Esophagus muscularis mucosa (tissue), 4 donors: ENCODE measurements at regions of chr19 and their contacts with region 1.

Region 1: DNA sequence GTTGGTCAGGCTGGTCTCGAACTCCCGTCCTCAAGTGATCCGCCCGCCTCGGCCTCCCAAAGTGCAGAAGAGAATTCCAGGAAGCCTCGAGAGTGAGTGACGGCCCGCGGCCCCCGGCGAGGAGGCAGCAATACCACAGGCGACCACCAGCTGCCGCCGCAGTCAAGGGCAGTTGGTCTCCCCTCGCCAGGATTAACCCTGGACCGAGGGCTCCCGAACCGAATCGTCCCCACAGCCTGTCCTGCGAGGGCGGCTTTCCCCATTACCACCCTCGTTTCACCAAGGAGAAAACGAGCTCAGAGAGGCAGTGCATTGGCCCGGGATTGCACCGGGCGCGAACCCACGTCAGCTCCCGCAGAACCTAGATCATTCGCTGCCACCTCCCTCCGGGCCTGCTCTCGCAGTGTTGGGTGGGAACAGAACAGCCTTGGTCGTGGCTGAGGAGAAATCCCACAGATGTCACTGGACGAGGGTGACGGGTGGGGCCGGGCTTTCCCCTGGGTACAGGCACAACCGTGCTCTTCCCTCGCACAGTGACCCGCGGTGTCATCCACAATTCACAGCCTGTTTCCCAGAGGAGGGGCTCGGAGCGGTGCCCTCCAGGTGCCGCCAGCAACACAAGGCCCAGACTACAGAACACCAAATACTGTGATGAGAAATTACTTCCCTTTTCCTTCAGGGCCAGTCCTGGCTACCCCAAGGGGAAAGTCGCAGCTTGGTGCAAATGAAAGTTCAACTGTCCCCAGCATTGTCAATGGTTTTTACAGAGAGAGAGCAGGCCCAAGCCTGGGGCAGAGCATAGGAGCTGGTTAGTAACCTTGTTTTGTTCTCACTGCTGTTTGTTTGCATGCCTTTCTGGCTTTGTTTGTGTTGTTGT is 24.8 kb downstream of the C2CD4C start:
- DNase-seq: no peak
- H3K4me3 ChIP-seq: no peak overlapping the region
- H3K27ac ChIP-seq: no peak overlapping the region
- H3K4me1 ChIP-seq: peaks cover 0 to 6% (median 0%) of the 10 kb centered on the region in 4 donors
- H3K27me3 ChIP-seq: peaks cover 0 to 48% (median 10%) of the 10 kb centered on the region in 4 donors
- CTCF ChIP-seq: peak; percentile 54 to 74 (median 55)
- EP300 ChIP-seq: no peak
- POLR2A ChIP-seq: no peak

Region 2: GRCh38 chr19:372306-372890 is 11.8 kb before region 1 on chr19:
- intact Hi-C with region 1: no loop called
- DNase-seq: no peak
- H3K4me3 ChIP-seq: no peak overlapping the region
- H3K27ac ChIP-seq: no peak overlapping the region
- H3K4me1 ChIP-seq: peaks cover 7 to 12% (median 10%) of the 10 kb centered on the region in 4 donors
- H3K27me3 ChIP-seq: peaks cover 0 to 70% (median 2%) of the 10 kb centered on the region in 4 donors
- CTCF ChIP-seq: no peak
- EP300 ChIP-seq: no peak
- POLR2A ChIP-seq: no peak

Region 3: DNA sequence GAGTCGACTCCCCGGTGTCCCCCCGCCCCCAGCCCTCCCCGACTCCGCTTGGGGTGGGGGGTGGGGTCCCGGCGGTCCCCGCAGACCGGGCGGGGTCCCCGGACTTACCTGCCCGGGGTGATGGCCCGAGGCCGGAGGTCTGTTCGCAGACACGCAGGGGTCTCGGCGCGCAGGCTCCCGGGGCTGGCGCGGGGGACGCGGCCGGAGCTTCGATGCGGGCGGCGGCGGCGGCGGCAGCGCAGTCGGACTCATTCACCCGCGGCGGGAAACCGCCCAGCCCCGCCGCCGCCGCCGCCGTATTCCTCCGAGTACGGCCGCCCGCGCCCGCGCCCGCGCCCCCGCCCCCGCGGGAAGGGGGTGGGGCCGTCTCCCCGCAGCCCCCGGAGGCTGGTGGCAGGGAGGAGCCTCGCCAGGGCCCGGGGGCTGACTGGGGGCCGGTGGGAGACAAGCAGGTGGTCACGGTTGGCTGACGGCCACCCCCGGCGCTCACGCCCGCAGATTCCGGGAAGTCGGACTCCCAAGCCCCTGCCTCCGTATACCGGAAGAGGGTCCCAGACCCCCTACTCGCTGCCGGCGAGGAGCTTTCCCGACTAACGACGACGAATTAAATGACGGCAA is 24.8 kb after region 1 on chr19 and contains the start of gene C2CD4C:
- intact Hi-C with region 1: no loop called
- DNase-seq: no peak
- H3K4me3 ChIP-seq: peak within 1 kb of the TSS; percentile 52 to 66 (median 54)
- H3K27ac ChIP-seq: no peak within 1 kb of the TSS
- H3K4me1 ChIP-seq: peaks cover 18 to 35% (median 27%) of the 10 kb centered on the region in 4 donors
- H3K27me3 ChIP-seq: peaks cover 0 to 75% (median 39%) of the 10 kb centered on the region in 4 donors
- CTCF ChIP-seq: no peak
- EP300 ChIP-seq: no peak
- POLR2A ChIP-seq: no peak
- total RNA-seq, gene C2CD4C: 0.46 to 3.7 (median 1.7) TPM

Region 4: DNA sequence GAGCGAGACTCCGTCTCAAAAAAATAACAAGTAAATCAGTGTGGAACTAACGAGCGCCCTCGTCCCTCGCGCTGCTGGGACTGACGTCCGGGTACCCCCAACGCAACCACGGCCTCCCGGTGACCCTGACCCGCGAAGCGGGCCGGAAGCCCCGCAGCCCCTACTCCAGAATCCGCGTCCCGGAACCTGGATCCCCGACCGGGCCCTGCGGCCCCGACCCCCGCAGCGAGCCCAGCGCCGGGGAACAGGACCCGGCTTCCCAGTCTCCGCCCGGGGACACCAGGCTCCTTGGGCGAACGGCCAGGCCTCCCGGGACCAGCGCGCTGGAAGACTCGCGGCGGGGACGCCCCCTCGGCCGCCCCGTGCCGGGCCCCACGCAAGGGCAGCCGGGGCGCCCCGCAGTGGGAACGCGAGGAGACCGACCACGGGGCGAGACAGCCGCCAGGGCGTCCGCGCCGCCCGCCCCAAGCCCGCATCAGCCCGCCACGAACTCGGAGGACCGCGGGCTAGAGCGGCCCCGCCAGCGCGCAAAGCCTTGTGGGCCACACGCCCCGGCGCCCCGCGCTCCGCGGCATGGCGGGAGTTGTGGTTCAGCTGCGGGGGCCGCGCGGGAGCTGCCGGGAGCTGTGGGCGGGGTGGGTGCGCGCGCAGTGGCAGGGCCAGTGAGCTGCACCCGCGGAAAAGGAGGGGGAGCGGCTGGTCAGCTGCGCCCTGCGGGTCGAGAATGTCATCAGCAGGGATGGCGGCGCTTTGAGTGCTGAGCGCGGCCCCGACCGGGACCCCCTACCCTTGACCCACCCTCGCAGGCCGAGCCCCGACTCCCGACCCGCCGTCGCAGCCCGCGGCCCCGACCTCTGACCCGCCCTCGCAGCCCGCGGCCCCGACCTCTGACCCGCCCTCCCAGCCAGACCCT is 104.6 kb after region 1 on chr19:
- intact Hi-C with region 1: loop called (anchors 10 kb)
- DNase-seq: no peak
- H3K4me3 ChIP-seq: peak overlapping the region; percentile 90 to 97 (median 94)
- H3K27ac ChIP-seq: peak overlapping the region; percentile 88 to 97 (median 92)
- H3K4me1 ChIP-seq: peaks cover 11 to 29% (median 26%) of the 10 kb centered on the region in 4 donors
- H3K27me3 ChIP-seq: peaks cover 0 to 32% (median 0%) of the 10 kb centered on the region in 4 donors
- CTCF ChIP-seq: peak in 2 of 3 experiments; percentile 3 to 45
- EP300 ChIP-seq: no peak
- POLR2A ChIP-seq: peak; percentile 51

Region 5: DNA sequence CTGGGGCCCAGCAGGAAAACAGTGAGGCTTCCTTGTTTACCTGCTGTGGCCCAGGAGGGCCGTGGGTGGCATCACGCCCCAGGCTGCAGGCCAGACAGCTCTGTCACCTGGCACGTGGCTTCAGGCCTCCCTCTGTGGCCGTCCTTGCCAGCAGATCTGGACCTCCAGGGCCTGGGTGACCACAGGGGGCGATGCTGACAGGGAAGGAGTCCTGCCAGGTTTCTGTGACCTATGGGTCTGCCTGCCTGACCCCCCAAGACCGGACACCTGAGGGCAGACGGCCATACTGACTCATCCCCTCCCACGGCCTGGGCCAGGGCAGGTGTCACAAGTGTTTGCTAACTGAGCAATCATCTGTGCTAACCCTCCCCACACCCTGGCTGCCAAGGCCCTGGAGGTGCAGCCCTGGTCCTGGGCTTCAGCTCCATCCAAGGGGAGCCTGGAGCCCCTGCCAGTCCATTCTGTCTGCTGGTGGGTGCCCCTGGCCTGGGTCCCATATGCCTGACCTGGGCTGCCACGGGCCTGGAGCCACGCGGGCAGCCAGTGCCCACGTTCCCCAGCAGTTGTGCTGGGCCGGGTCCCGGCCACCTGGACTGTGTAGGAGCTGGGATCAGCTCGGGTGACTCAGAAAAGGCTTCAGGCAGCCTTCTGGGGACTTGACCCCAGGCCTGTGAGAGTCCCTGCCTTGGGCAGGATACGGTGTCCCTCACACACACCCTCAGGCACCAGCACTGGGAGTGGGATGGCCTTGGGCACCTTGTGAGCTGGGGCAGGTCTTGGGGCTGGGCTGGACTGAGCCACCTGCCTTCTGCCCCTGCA is 151.1 kb after region 1 on chr19:
- intact Hi-C with region 1: no loop called
- DNase-seq: no peak
- H3K4me3 ChIP-seq: no peak overlapping the region
- H3K27ac ChIP-seq: peak overlapping the region; percentile 32 to 99 (median 48)
- H3K4me1 ChIP-seq: peaks cover 38 to 64% (median 53%) of the 10 kb centered on the region in 4 donors
- H3K27me3 ChIP-seq: no peaks in the 10 kb centered on the region
- CTCF ChIP-seq: no peak
- EP300 ChIP-seq: no peak
- POLR2A ChIP-seq: no peak